T-cell (primary cell): ENCODE measurements at regions of chr12 and their contacts with region 1.

Region 1: GRCh38 chr12:48777501-48778400 is 11.1 kb downstream of the ADCY6 start:
- DNase-seq: no peak
- ATAC-seq: no peak
- H3K4me3 ChIP-seq: no peak overlapping the region
- H3K4me3 Mint-ChIP-seq: no peak overlapping the region
- H3K27ac ChIP-seq: no peak overlapping the region
- H3K27ac Mint-ChIP-seq: no peak overlapping the region
- H3K4me1 ChIP-seq: no peaks in the 10 kb centered on the region
- H3K4me1 Mint-ChIP-seq: no peaks in the 10 kb centered on the region
- H3K27me3 ChIP-seq: peaks cover 0 to 10% of the 10 kb centered on the region in 2 experiments
- H3K27me3 Mint-ChIP-seq: peaks cover 0 to 9% of the 10 kb centered on the region in 2 donors

Region 2: DNA sequence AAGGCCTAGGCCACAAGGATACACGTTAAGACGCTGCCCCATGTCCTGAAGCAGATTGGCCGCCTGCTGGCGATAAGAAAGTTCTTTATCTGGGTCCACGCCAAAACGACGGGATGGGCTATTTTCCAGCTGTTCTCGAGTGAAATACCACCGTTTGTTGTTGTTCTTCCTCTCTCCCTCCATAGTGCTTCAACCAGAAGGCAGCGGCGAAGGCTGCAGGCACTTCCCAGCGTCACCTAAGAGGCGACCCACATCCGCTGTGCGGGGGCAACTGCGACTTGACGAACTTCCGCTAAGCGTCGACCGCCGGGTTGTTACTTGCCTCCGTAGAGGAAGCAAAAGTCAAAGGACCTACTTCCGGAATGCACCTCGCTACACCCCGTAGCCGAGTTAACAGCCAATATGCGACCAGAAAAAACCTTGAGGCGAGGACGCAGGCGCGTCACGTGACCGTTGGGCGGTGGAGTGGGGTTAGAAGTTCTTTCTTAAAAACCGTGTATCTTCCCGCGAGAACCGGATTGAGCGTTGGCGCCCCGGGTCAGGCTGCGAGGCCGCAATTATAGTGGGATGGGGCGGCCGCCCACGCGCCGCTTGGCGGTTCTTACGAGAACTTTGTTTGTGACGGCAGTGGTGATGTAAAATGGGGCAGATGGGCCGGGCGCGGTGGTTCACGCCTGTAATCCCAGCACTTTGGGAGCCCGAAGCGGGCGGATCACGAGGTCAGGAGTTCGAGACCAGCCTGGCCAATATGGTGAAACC is 61.1 kb before region 1 on chr12 and contains the start of gene CCNT1:
- CTCF ChIA-PET with region 1: no interaction called
- POLR2A ChIA-PET with region 1: no interaction called
- DNase-seq: peak; percentile 86 to 100 (median 99)
- ATAC-seq: peak; percentile 90 to 96 (median 94)
- H3K4me3 ChIP-seq: peak within 1 kb of the TSS; percentile 76 to 89
- H3K4me3 Mint-ChIP-seq: peak within 1 kb of the TSS; percentile 88 to 97 (median 91)
- H3K27ac ChIP-seq: peak within 1 kb of the TSS; percentile 91
- H3K27ac Mint-ChIP-seq: peak within 1 kb of the TSS; percentile 95 to 97
- H3K4me1 ChIP-seq: peaks cover 15 to 36% of the 10 kb centered on the region in 2 experiments
- H3K4me1 Mint-ChIP-seq: peaks cover 43 to 47% (median 43%) of the 10 kb centered on the region in 3 donors
- H3K27me3 ChIP-seq: no peaks in the 10 kb centered on the region
- H3K27me3 Mint-ChIP-seq: no peaks in the 10 kb centered on the region
- total RNA-seq, gene CCNT1: 49.6 to 109 (median 57.7) TPM

Region 3: GRCh38 chr12:49855005-49855404 is 1077.3 kb after region 1 on chr12:
- CTCF ChIA-PET with region 1: no interaction called
- POLR2A ChIA-PET with region 1: no interaction called
- DNase-seq: no peak
- ATAC-seq: no peak
- H3K4me3 ChIP-seq: no peak overlapping the region
- H3K4me3 Mint-ChIP-seq: no peak overlapping the region
- H3K27ac ChIP-seq: no peak overlapping the region
- H3K27ac Mint-ChIP-seq: no peak overlapping the region
- H3K4me1 ChIP-seq: no peaks in the 10 kb centered on the region
- H3K4me1 Mint-ChIP-seq: no peaks in the 10 kb centered on the region
- H3K27me3 ChIP-seq: peaks cover 0 to 2% of the 10 kb centered on the region in 2 experiments
- H3K27me3 Mint-ChIP-seq: peaks cover 9 to 18% of the 10 kb centered on the region in 2 donors

Region 4: GRCh38 chr12:50257686-50258551 is 1480.2 kb after region 1 on chr12:
- CTCF ChIA-PET with region 1: no interaction called
- POLR2A ChIA-PET with region 1: interaction called in 1 of 2 experiments, 10 read pairs
- DNase-seq: no peak
- ATAC-seq: no peak
- H3K4me3 ChIP-seq: no peak overlapping the region
- H3K4me3 Mint-ChIP-seq: no peak overlapping the region
- H3K27ac ChIP-seq: no peak overlapping the region
- H3K27ac Mint-ChIP-seq: no peak overlapping the region
- H3K4me1 ChIP-seq: no peaks in the 10 kb centered on the region
- H3K4me1 Mint-ChIP-seq: peaks cover 0 to 6% (median 3%) of the 10 kb centered on the region in 3 donors
- H3K27me3 ChIP-seq: no peaks in the 10 kb centered on the region
- H3K27me3 Mint-ChIP-seq: no peaks in the 10 kb centered on the region